Breast epithelium (tissue), 4 donors: ENCODE measurements at regions of chr12 and their contacts with region 1.

Region 1: DNA sequence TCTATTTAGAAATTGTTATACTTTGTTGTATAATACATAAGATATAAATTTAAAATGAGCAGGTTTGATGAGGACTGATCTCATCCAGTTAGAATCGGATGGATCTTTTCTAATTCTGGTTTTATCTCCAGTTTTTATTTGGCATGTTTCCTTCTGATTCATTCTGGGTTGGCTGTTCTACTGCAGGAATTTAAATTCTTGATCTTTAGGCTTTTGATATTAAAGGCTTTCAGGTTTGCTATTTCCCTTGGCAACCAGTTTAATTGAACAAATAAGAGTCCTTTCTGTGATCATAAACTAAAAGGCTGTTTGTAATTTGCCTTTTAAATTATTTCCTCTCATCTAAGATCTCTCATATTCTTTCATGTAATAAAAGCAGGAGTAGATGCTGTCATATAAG is 83.4 kb downstream of the PDE6H start:
- DNase-seq: no peak
- H3K4me3 ChIP-seq: no peak overlapping the region
- H3K27ac ChIP-seq: no peak overlapping the region
- H3K4me1 ChIP-seq: no peaks in the 10 kb centered on the region
- H3K27me3 ChIP-seq: no peaks in the 10 kb centered on the region
- CTCF ChIP-seq: no peak
- POLR2A ChIP-seq: no peak

Region 2: DNA sequence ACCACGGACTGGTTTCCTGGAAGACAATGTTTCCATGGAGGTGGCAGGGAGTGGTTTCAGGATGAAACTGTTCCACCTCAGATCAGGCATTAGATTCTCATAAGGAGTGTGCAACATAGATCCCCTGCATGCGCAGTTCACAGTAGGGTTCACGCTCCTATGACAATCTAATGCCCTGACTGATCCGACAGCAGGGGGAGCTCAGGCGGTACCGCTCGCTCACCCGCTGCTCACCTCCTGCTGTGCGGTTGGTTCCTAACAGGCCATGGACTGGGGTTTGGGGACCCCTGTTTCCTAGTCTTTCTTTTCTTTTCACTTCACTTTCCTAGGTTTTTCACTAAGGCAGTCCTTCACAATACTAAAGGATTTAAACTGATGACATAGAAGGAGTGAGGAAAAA is 399.4 kb before region 1 on chr12:
- intact Hi-C with region 1: loop called (anchors 5 kb)
- DNase-seq: no peak
- H3K4me3 ChIP-seq: no peak overlapping the region
- H3K27ac ChIP-seq: no peak overlapping the region
- H3K4me1 ChIP-seq: no peaks in the 10 kb centered on the region
- H3K27me3 ChIP-seq: no peaks in the 10 kb centered on the region
- CTCF ChIP-seq: no peak
- POLR2A ChIP-seq: no peak

Region 3: DNA sequence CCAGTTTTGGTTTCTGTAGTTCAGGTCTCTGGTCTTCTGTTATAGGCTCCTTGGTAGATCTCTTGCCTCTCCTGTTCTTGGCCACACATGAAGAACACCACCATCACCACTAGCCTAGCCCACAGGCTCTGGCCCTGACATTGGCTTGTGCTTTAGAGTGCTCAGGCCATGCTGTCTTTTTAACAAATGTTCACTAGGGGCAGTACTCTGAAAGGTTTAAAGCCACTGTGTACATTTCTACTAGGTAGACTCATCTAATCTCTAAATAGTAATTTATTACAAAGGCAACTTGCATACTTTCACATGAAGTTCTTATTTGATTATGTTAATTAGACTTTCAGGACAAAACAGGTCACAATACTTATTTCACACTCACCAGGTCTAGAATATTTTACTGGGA is 45.1 kb before region 1 on chr12:
- intact Hi-C with region 1: no loop called
- DNase-seq: no peak
- H3K4me3 ChIP-seq: no peak overlapping the region
- H3K27ac ChIP-seq: no peak overlapping the region
- H3K4me1 ChIP-seq: no peaks in the 10 kb centered on the region
- H3K27me3 ChIP-seq: no peaks in the 10 kb centered on the region
- CTCF ChIP-seq: no peak
- POLR2A ChIP-seq: no peak